Thyroid gland (tissue), 4 donors: ENCODE measurements at regions of chr9 and their contacts with region 1.

Region 1: DNA sequence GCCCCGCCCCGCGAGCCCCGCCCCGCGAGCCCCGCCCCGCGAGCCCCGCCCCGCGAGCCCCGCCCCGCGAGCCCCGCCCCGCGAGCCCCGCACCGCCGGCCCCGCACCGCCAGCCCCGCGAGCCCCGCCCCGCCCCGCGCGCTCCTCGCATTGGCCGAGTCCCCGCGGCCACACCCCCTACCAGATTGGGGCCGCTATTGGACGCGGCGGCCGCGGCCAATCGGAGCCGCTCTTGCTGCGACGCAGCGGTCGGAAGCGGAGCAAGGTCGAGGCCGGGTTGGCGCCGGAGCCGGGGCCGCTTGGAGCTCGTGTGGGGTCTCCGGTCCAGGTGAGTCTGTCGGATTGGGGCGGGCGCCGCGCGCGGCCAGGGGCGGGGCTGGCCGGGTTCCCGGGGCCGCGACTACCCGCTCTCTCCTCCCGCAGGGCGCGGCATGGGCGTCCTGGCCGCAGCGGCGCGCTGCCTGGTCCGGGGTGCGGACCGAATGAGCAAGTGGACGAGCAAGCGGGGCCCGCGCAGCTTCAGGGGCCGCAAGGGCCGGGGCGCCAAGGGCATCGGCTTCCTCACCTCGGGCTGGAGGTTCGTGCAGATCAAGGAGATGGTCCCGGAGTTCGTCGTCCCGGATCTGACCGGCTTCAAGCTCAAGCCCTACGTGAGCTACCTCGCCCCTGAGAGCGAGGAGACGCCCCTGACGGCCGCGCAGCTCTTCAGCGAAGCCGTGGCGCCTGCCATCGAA is at the start of gene MRPL41:
- DNase-seq: peak; percentile 86 to 90
- H3K4me3 ChIP-seq: peak within 1 kb of the TSS; percentile 7 to 89 (median 78)
- H3K27ac ChIP-seq: peak within 1 kb of the TSS; percentile 69 to 92 (median 87)
- H3K4me1 ChIP-seq: peaks cover 27 to 29% of the 10 kb centered on the region in 2 donors
- H3K27me3 ChIP-seq: no peaks in the 10 kb centered on the region
- CTCF ChIP-seq: no peak
- POLR2A ChIP-seq: peak in 1 of 2 donors; percentile 72
- total RNA-seq, gene MRPL41: 24.5 to 67.2 (median 47.7) TPM

Region 2: DNA sequence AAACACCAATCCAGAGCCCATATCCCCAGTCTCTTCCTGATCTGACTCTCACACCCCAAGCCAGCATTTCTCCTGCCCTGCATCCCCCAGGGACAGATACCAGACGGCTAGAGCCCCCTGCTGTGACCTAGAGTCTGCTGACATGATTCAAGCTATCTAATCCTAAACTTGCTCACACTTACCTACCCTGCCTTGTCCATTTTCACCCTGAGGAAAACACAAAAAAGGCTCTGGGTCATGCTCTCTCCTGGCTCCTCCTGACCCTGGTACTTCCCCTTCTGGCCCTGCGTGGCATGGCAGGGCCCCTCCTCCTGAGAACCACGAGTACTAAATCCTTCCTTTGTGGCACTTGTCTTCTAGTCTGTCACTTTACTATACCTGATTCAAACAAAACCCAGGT is 50.8 kb after region 1 on chr9:
- intact Hi-C with region 1: no loop called
- DNase-seq: no peak
- H3K4me3 ChIP-seq: no peak overlapping the region
- H3K27ac ChIP-seq: no peak overlapping the region
- H3K4me1 ChIP-seq: peaks cover 21 to 22% of the 10 kb centered on the region in 2 donors
- H3K27me3 ChIP-seq: no peaks in the 10 kb centered on the region
- CTCF ChIP-seq: no peak
- POLR2A ChIP-seq: no peak

Region 3: GRCh38 chr9:137618105-137619067 is 66.6 kb after region 1 on chr9 and contains the start of gene EHMT1:
- intact Hi-C with region 1: loop called (anchors 10 kb)
- DNase-seq: peak; percentile 79 to 87
- H3K4me3 ChIP-seq: peak within 1 kb of the TSS; percentile 69 to 85 (median 85)
- H3K27ac ChIP-seq: peak within 1 kb of the TSS; percentile 71 to 86 (median 85)
- H3K4me1 ChIP-seq: peaks cover 28 to 36% of the 10 kb centered on the region in 2 donors
- H3K27me3 ChIP-seq: no peaks in the 10 kb centered on the region
- CTCF ChIP-seq: no peak
- POLR2A ChIP-seq: peak in 1 of 2 donors; percentile 77
- total RNA-seq, gene EHMT1: 56.8 to 99.5 (median 94.4) TPM